Naive thymus-derived CD4-positive, alpha-beta T cell (primary cell): ENCODE measurements at regions of chr6 and their contacts with region 1.

Region 1: GRCh38 chr6:70686548-70687133 is 19.0 kb downstream of the SMAP1 start:
- DNase-seq: peak in 6 of 9 donors; percentile 10 to 45 (median 32)
- ATAC-seq: peak; percentile 71
- H3K4me3 ChIP-seq: no peak overlapping the region
- H3K4me3 Mint-ChIP-seq: no peak overlapping the region
- H3K27ac ChIP-seq: no peak overlapping the region
- H3K27ac Mint-ChIP-seq: no peak overlapping the region
- H3K4me1 ChIP-seq: peaks cover 3 to 5% of the 10 kb centered on the region in 2 donors
- H3K4me1 Mint-ChIP-seq: peaks cover 26 to 70% (median 63%) of the 10 kb centered on the region in 7 donors
- H3K27me3 ChIP-seq: no peaks in the 10 kb centered on the region
- H3K27me3 Mint-ChIP-seq: no peaks in the 10 kb centered on the region

Region 2: DNA sequence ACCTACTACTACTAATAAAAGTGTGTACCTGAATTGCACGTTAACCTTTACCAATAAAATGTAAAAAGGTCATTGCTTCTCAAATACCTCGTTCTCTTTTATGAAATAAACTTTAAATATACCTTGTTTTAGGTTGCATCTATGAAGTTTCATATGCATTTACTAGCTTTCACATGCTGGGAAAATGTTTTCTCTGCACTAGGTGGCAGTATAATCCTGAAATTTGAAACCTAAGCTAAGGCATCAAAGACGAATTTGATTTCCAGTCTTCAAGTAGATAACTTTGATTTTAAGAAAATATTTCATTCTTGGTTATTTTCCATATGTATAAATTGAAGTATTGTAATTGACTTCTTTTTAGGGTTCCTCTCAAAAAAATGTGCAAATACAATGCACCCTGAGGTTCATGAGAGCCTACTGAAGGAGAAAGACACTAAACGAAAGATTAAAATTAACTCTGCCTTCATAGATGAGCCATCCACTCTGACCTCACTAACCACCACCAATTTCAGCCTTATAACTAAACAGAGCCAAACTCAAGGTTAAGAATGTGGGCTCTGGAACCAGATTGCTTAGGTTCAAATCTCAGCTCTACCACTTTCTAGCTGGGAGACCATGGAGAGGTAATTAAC is 376.5 kb before region 1 on chr6:
- CTCF ChIA-PET with region 1: no interaction called
- POLR2A ChIA-PET with region 1: no interaction called
- intact Hi-C with region 1: loop called in 1 of 2 experiments (anchors 1 kb)
- DNase-seq: peak in 5 of 9 donors; percentile 7 to 21 (median 11)
- ATAC-seq: no peak
- H3K4me3 ChIP-seq: no peak overlapping the region
- H3K4me3 Mint-ChIP-seq: no peak overlapping the region
- H3K27ac ChIP-seq: no peak overlapping the region
- H3K27ac Mint-ChIP-seq: no peak overlapping the region
- H3K4me1 ChIP-seq: no peaks in the 10 kb centered on the region
- H3K4me1 Mint-ChIP-seq: peaks cover 0 to under 1% (median 0%) of the 10 kb centered on the region in 7 donors
- H3K27me3 ChIP-seq: no peaks in the 10 kb centered on the region
- H3K27me3 Mint-ChIP-seq: peaks cover 9 to 41% (median 28%) of the 10 kb centered on the region in 5 donors

Region 3: GRCh38 chr6:70413114-70413991 is 273.3 kb before region 1 on chr6 and contains the start of gene FAM135A:
- CTCF ChIA-PET with region 1: no interaction called
- POLR2A ChIA-PET with region 1: interaction called, 3 read pairs
- intact Hi-C with region 1: loop called (anchors 2 to 5 kb)
- DNase-seq: peak; percentile 80 to 94 (median 89)
- ATAC-seq: peak; percentile 98
- H3K4me3 ChIP-seq: peak within 1 kb of the TSS; percentile 79
- H3K4me3 Mint-ChIP-seq: peak within 1 kb of the TSS; percentile 91 to 99 (median 94)
- H3K27ac ChIP-seq: peak within 1 kb of the TSS; percentile 69
- H3K27ac Mint-ChIP-seq: peak within 1 kb of the TSS; percentile 82 to 96 (median 92)
- H3K4me1 ChIP-seq: peaks cover 0 to 4% of the 10 kb centered on the region in 2 donors
- H3K4me1 Mint-ChIP-seq: peaks cover 7 to 27% (median 26%) of the 10 kb centered on the region in 7 donors
- H3K27me3 ChIP-seq: no peaks in the 10 kb centered on the region
- H3K27me3 Mint-ChIP-seq: peaks cover 0 to 18% (median 0%) of the 10 kb centered on the region in 5 donors
- total RNA-seq, gene FAM135A: 6.8 to 15.4 (median 12.3) TPM

Region 4: DNA sequence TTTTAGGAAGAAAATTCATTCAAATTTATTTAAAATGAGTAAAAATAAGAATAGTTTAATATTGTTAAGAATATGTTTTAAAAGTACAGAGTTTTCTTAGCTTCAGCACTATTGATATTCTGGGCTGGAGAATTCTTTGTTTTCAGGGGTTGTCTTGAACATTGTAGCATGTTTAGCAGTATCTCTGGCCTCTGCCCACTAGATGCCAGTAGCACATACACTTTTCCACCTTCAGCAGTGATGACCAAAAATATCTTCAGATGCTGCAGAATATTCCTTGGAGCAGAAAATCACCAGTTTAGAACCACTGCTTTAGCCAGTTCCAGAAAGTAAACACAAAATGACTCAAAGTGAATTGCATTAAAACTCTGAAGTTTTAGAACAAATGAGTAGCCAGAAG is 139.3 kb before region 1 on chr6:
- CTCF ChIA-PET with region 1: interaction called, 17 read pairs
- POLR2A ChIA-PET with region 1: no interaction called
- intact Hi-C with region 1: loop called (anchors 1 kb)
- DNase-seq: peak in 2 of 9 donors; percentile 5 to 17
- ATAC-seq: no peak
- H3K4me3 ChIP-seq: no peak overlapping the region
- H3K4me3 Mint-ChIP-seq: no peak overlapping the region
- H3K27ac ChIP-seq: no peak overlapping the region
- H3K27ac Mint-ChIP-seq: no peak overlapping the region
- H3K4me1 ChIP-seq: no peaks in the 10 kb centered on the region
- H3K4me1 Mint-ChIP-seq: peaks cover 0 to 2% (median 0%) of the 10 kb centered on the region in 7 donors
- H3K27me3 ChIP-seq: no peaks in the 10 kb centered on the region
- H3K27me3 Mint-ChIP-seq: peaks cover 0 to 8% (median 0%) of the 10 kb centered on the region in 5 donors

Region 5: GRCh38 chr6:70599187-70599586 is 87.5 kb before region 1 on chr6:
- CTCF ChIA-PET with region 1: no interaction called
- POLR2A ChIA-PET with region 1: no interaction called
- intact Hi-C with region 1: loop called in 1 of 2 experiments (anchors 5 kb)
- DNase-seq: peak in 2 of 9 donors; percentile 5 to 34
- ATAC-seq: peak; percentile 41
- H3K4me3 ChIP-seq: no peak overlapping the region
- H3K4me3 Mint-ChIP-seq: peak overlapping the region in 1 of 10 donors; percentile 44
- H3K27ac ChIP-seq: no peak overlapping the region
- H3K27ac Mint-ChIP-seq: peak overlapping the region in 2 of 9 donors; percentile 30 to 35
- H3K4me1 ChIP-seq: no peaks in the 10 kb centered on the region
- H3K4me1 Mint-ChIP-seq: peaks cover 0 to 14% (median 5%) of the 10 kb centered on the region in 7 donors
- H3K27me3 ChIP-seq: no peaks in the 10 kb centered on the region
- H3K27me3 Mint-ChIP-seq: peaks cover 0 to 5% (median 0%) of the 10 kb centered on the region in 5 donors

Region 6: GRCh38 chr6:70629929-70630328 is 56.7 kb before region 1 on chr6:
- CTCF ChIA-PET with region 1: no interaction called
- POLR2A ChIA-PET with region 1: no interaction called
- intact Hi-C with region 1: no loop called
- DNase-seq: no peak
- ATAC-seq: no peak
- H3K4me3 ChIP-seq: no peak overlapping the region
- H3K4me3 Mint-ChIP-seq: no peak overlapping the region
- H3K27ac ChIP-seq: no peak overlapping the region
- H3K27ac Mint-ChIP-seq: no peak overlapping the region
- H3K4me1 ChIP-seq: no peaks in the 10 kb centered on the region
- H3K4me1 Mint-ChIP-seq: peaks cover 0 to 7% (median 0%) of the 10 kb centered on the region in 7 donors
- H3K27me3 ChIP-seq: no peaks in the 10 kb centered on the region
- H3K27me3 Mint-ChIP-seq: peaks cover 0 to 22% (median 9%) of the 10 kb centered on the region in 5 donors

Region 7: GRCh38 chr6:70667711-70668498 is 18.7 kb before region 1 on chr6 and contains the start of gene SMAP1:
- CTCF ChIA-PET with region 1: interaction called, 9 read pairs
- POLR2A ChIA-PET with region 1: interaction called, 4 read pairs
- intact Hi-C with region 1: loop called (anchors 1 kb)
- DNase-seq: peak; percentile 84 to 96 (median 90)
- ATAC-seq: peak; percentile 97
- H3K4me3 ChIP-seq: peak within 1 kb of the TSS; percentile 69
- H3K4me3 Mint-ChIP-seq: peak within 1 kb of the TSS; percentile 83 to 96 (median 90)
- H3K27ac ChIP-seq: peak within 1 kb of the TSS; percentile 82
- H3K27ac Mint-ChIP-seq: peak within 1 kb of the TSS; percentile 92 to 98 (median 95)
- H3K4me1 ChIP-seq: peaks cover 23 to 26% of the 10 kb centered on the region in 2 donors
- H3K4me1 Mint-ChIP-seq: peaks cover 40 to 58% (median 55%) of the 10 kb centered on the region in 7 donors
- H3K27me3 ChIP-seq: no peaks in the 10 kb centered on the region
- H3K27me3 Mint-ChIP-seq: no peaks in the 10 kb centered on the region
- total RNA-seq, gene SMAP1: 18.7 to 45.7 (median 20.8) TPM